Endothelial cell of umbilical vein (primary cell): ENCODE measurements at regions of chr7 and their contacts with region 1.

Region 1: GRCh38 chr7:150716368-150716767 is at the start of gene GIMAP1:
- DNase-seq: peak; percentile 88
- H3K4me3 ChIP-seq: peak within 1 kb of the TSS; percentile 61 to 84 (median 78)
- H3K27ac ChIP-seq: peak within 1 kb of the TSS; percentile 39
- H3K4me1 ChIP-seq: peaks cover 18% of the 10 kb centered on the region
- H3K27me3 ChIP-seq: no peaks in the 10 kb centered on the region
- CTCF ChIP-seq: no peak
- POLR2A ChIP-seq: peak; percentile 97
- total RNA-seq, gene GIMAP1: 11.8 and 11.9 TPM in 2 replicates

Region 2: DNA sequence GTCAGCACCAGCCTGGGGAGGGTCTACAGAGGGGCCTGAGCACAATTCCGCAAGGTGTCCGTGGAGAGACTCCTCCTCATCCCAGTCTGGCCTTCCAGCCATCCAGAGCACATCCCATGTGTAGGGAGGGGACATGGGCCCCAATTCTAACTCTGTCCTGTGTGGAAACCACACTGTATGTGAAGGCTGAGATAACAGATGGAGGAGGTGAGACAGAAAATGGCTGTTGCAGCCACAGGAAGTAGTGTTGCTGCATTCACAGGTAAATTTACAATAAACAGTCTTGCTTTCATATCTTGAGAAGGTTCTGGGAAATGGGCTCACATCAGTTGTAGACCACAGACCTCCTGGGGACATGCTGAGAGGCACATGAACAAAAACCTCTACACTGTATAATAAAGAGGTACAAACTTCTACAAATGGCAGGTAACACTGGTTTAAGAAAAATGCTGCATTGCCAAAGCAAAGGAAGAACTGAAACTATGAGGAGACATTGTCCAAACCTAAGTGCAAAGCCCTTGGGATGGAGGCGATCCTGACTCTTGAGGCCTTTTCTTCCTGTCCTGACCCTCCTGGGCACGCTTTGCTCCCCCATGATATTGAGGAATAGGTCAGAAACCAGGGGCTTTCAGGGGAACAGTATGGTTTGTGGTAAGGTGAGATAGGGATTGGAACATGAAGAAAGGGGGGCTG is 52.4 kb before region 1 on chr7:
- CTCF ChIA-PET with region 1: no interaction called
- POLR2A ChIA-PET with region 1: no interaction called
- dilution Hi-C with region 1: no loop called
- intact Hi-C with region 1: no loop called
- DNase-seq: no peak
- H3K4me3 ChIP-seq: no peak overlapping the region
- H3K27ac ChIP-seq: no peak overlapping the region
- H3K4me1 ChIP-seq: no peaks in the 10 kb centered on the region
- H3K27me3 ChIP-seq: no peaks in the 10 kb centered on the region
- CTCF ChIP-seq: no peak
- POLR2A ChIP-seq: no peak

Region 3: GRCh38 chr7:150675714-150676113 is 40.7 kb before region 1 on chr7:
- CTCF ChIA-PET with region 1: interaction called, 3 read pairs
- POLR2A ChIA-PET with region 1: interaction called, 5 read pairs
- dilution Hi-C with region 1: no loop called
- intact Hi-C with region 1: loop called (anchors 2 kb)
- DNase-seq: peak; percentile 43
- H3K4me3 ChIP-seq: no peak overlapping the region
- H3K27ac ChIP-seq: peak overlapping the region; percentile 48
- H3K4me1 ChIP-seq: peaks cover 19% of the 10 kb centered on the region
- H3K27me3 ChIP-seq: no peaks in the 10 kb centered on the region
- CTCF ChIP-seq: no peak
- POLR2A ChIP-seq: no peak

Region 4: DNA sequence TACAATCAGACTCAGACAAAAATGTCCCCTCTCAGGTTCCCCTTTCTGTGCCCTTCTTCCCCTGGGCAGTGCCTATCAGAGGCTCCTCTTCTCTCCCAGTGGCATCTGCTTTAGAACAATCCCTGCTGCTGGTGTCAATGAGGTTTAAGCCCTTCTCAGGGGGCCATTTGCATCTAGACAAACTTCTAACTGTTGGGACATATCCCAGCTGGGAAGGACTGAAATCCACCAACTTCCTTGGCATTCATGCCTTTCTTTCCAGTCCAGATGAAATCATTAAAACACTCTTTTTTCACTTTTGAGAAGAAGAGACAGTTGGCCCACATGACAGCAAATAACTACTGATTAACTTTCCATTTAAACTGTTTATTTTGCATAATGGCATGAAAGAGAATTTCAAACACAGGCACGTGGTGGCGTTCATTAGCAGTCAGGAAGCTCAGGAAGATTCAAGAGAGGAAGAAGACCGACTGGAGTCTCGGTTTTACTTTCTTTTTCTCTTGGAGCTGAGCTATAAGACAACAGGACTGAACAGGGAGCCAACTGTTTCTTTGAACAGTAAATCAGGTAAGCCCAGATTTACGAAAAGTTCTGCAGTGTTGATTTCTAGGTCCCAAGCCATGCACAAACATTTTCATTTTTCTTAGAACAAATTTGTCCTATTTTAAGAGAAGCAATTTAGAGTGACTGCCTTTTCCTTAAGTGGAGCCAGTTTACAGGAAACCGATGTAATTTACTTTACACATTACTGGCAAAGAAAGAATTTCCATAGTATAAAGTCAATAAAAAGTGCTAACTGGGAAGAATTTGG is 30.9 kb before region 1 on chr7 and contains the start of gene GIMAP2:
- CTCF ChIA-PET with region 1: interaction called, 12 read pairs
- POLR2A ChIA-PET with region 1: no interaction called
- dilution Hi-C with region 1: no loop called
- intact Hi-C with region 1: no loop called
- DNase-seq: peak; percentile 87
- H3K4me3 ChIP-seq: peak within 1 kb of the TSS; percentile 22 to 93 (median 90)
- H3K27ac ChIP-seq: peak within 1 kb of the TSS; percentile 83
- H3K4me1 ChIP-seq: peaks cover 15% of the 10 kb centered on the region
- H3K27me3 ChIP-seq: no peaks in the 10 kb centered on the region
- CTCF ChIP-seq: no peak
- POLR2A ChIP-seq: no peak
- total RNA-seq, gene GIMAP2: 26.2 and 27.9 TPM in 2 replicates

Region 5: DNA sequence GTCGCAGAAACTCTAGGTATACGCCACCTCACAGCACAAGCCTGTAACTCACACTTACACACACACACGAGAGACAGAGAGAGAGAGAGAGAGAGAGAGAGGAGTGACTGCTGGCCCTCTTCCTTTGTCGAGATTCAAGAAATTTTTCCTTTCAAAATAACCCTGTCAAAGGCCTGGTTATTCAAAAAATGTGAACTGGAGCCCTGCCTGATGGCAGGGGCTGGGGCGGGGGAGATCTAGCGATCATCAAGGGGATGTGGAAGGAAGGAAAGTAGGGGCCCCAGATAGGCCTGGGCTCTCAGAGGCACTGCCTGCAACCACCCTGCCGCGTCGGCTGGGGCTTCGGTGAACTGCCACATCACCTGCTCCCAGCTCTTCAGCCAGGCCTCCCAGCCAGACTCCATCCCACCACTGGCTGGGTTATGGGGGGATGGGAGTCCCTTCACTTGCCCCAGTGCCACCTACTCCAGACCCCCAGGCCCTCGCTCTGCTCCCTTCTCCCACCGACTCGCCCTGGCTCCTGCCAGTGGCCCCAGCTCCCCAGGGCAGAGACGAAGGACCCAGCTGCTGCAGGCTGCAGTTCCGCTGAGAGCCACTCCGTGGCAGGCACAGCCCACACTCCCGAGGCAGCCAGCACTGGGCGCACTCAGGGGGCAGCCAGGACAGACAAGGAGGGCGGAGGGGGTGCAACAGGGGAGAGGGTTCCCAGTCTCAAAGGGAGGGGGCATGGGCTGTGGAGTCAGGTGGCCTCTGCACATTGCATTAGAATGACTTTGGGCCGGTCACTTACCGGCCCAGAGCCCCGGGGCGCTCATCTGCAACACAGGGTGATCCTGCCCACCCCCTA is 246.4 kb after region 1 on chr7:
- CTCF ChIA-PET with region 1: no interaction called
- POLR2A ChIA-PET with region 1: no interaction called
- dilution Hi-C with region 1: no loop called
- intact Hi-C with region 1: no loop called
- DNase-seq: peak; percentile 36
- H3K4me3 ChIP-seq: no peak overlapping the region
- H3K27ac ChIP-seq: no peak overlapping the region
- H3K4me1 ChIP-seq: no peaks in the 10 kb centered on the region
- H3K27me3 ChIP-seq: peaks cover 17 to 23% of the 10 kb centered on the region in 2 experiments
- CTCF ChIP-seq: peak; percentile 81 to 96
- POLR2A ChIP-seq: no peak